ENCODE measurements at regions of chr19 and their contacts with region 1.

Region 1: GRCh38 chr19:10644260-10645007 is 9.7 kb upstream of the ILF3 start:
- DNase-seq: peak; percentile 90
- ATAC-seq: peak; percentile 93
- H3K4me3 Mint-ChIP-seq: no peak overlapping the region
- H3K27ac Mint-ChIP-seq: peak overlapping the region; percentile 56
- H3K4me1 Mint-ChIP-seq: peaks cover 11% of the 10 kb centered on the region
- H3K27me3 Mint-ChIP-seq: no peaks in the 10 kb centered on the region

Region 2: DNA sequence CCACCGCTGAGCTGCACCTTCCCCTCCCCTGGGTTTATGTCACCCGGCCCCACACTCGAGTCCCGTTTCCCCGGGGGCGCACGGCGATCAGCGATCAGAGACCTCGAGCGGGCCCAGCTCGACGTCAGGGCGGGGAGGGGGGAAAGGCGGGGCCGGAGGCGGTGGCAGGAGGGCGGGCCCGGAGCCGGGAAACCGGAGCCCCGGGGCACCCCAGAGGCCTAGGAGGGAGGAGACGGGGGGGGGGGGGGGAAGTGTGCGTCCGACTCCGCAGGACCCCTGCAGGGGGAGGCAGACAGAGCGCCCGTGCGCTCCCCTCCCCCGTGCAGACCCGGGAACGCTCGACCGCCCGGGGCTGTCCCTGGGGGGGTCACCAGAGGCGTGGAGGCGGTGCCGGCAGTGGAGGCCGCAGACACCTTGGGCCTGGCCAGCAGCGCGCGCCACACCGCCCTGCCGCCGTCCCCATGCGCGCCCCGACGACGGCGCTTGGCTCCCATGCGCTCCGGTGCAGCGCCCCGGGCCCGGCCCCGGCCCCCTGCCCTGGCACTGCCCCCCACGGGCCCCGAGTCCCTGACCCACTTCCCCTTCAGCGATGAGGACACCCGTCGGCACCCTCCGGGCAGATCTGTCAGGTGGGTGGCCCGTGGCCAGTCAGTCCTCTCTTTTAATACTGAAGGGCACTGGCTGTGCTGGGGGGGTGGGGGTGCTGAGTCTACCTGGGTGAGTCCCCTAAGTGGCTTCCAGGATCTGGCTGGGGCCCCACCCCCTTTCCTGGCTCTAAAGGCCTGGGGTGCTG is 212.3 kb before region 1 on chr19:
- POLR2A ChIA-PET with region 1: no interaction called
- DNase-seq: peak; percentile 80
- ATAC-seq: peak; percentile 35
- H3K4me3 Mint-ChIP-seq: peak overlapping the region; percentile 94
- H3K27ac Mint-ChIP-seq: peak overlapping the region; percentile 97
- H3K4me1 Mint-ChIP-seq: peaks cover 62% of the 10 kb centered on the region
- H3K27me3 Mint-ChIP-seq: peaks cover 10% of the 10 kb centered on the region

Region 3: GRCh38 chr19:10580979-10581631 is 63.3 kb before region 1 on chr19:
- POLR2A ChIA-PET with region 1: interaction called, 33 read pairs
- DNase-seq: peak; percentile 89
- ATAC-seq: peak; percentile 81
- H3K4me3 Mint-ChIP-seq: peak overlapping the region; percentile 33
- H3K27ac Mint-ChIP-seq: no peak overlapping the region
- H3K4me1 Mint-ChIP-seq: peaks cover 15% of the 10 kb centered on the region
- H3K27me3 Mint-ChIP-seq: peaks cover 6% of the 10 kb centered on the region

Region 4: GRCh38 chr19:10602330-10603083 is 41.9 kb before region 1 on chr19:
- POLR2A ChIA-PET with region 1: interaction called, 20 read pairs
- DNase-seq: peak; percentile 94
- ATAC-seq: peak; percentile 69
- H3K4me3 Mint-ChIP-seq: peak overlapping the region; percentile 99
- H3K27ac Mint-ChIP-seq: peak overlapping the region; percentile 100
- H3K4me1 Mint-ChIP-seq: peaks cover 23% of the 10 kb centered on the region
- H3K27me3 Mint-ChIP-seq: peaks cover 4% of the 10 kb centered on the region

Region 5: DNA sequence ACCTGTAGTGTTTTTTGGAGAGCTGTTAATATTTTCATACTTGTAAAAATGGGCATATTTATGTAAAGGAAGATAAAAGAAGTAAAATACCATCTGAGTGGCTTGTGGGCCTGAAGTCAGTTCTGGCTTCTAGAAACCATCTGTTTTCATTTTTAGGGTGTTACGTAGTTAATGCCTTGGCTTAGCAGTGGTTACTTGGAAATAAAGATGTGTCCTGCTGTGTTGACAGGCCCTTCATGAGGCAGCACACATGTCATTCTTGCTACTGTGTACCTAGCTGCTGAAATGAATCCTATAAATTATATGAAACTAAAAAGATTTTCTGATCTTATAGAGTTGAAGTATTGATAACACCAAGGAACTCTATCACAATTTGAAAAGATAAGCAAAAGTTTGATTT is 25.7 kb after region 1 on chr19:
- POLR2A ChIA-PET with region 1: no interaction called
- DNase-seq: no peak
- ATAC-seq: no peak
- H3K4me3 Mint-ChIP-seq: no peak overlapping the region
- H3K27ac Mint-ChIP-seq: no peak overlapping the region
- H3K4me1 Mint-ChIP-seq: peaks cover 16% of the 10 kb centered on the region
- H3K27me3 Mint-ChIP-seq: no peaks in the 10 kb centered on the region